WTC11 (cell line): ENCODE measurements at regions of chr6 and their contacts with region 1.

Region 1: DNA sequence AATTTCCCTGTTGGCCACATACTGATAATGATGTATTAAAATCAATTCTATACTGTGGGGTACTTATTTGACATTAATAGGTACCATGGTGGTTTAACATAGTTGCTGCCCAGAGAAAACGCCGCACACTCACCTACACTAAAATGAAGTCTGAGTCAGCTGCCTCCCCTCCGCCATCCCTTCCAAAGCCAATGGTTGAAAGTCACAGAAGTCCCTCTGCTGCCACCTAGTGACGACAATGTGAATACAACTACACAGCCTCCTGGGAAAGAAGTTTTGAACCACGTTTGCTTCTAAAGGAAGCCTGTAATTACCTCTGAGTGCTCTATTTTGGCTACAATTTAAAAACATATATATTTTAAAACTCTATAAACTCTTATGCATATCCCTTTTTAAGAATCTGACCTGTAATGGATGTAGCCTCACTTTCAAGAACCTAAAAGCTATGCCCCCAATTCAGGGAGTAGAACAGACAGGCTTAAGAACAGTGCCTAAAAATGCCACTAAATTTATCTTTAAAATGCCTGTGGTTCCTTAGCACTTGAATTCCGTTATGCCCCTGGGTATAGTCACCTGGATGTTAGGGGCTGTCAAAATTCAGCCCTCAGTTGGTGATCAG is 20.6 kb upstream of the ECI2 start:
- DNase-seq: peak; percentile 76
- ATAC-seq: peak; percentile 94
- H3K4me3 Mint-ChIP-seq: no peak overlapping the region
- H3K27ac Mint-ChIP-seq: no peak overlapping the region
- H3K4me1 Mint-ChIP-seq: peaks cover 18% of the 10 kb centered on the region
- H3K27me3 Mint-ChIP-seq: no peaks in the 10 kb centered on the region
- CTCF ChIP-seq: peak; percentile 74

Region 2: DNA sequence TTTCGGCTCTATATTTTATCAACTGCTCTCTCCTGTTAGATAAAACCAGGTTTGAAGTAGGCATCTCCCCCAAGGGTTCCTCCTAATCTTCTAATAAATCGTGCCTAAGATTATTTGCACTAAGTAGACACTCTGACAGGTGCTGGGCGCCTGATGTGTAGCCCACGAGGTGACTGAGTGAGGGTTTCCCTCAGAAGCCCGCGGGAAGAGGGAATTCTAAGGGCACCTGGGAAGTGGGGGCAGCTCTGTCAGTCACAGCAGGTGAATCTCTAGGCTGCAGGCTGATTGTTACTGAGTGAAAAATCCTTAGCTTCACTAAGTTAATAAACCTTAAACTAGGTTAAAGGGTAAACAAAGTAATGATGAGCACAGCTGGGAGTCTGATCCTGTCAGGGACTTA is 472.6 kb before region 1 on chr6:
- CTCF ChIA-PET with region 1: no interaction called
- POLR2A ChIA-PET with region 1: no interaction called
- DNase-seq: no peak
- ATAC-seq: no peak
- H3K4me3 Mint-ChIP-seq: no peak overlapping the region
- H3K27ac Mint-ChIP-seq: no peak overlapping the region
- H3K4me1 Mint-ChIP-seq: peaks cover 8% of the 10 kb centered on the region; the same call in 1 of the 2 replicates
- H3K27me3 Mint-ChIP-seq: peaks cover 11% of the 10 kb centered on the region
- CTCF ChIP-seq: no peak

Region 3: GRCh38 chr6:4055420-4056041 is 100.4 kb before region 1 on chr6:
- CTCF ChIA-PET with region 1: interaction called, 10 read pairs
- POLR2A ChIA-PET with region 1: no interaction called
- DNase-seq: no peak
- ATAC-seq: no peak
- H3K4me3 Mint-ChIP-seq: no peak overlapping the region
- H3K27ac Mint-ChIP-seq: no peak overlapping the region
- H3K4me1 Mint-ChIP-seq: peaks cover 3% of the 10 kb centered on the region; the same call in 1 of the 2 replicates
- H3K27me3 Mint-ChIP-seq: no peaks in the 10 kb centered on the region
- CTCF ChIP-seq: no peak

Region 4: DNA sequence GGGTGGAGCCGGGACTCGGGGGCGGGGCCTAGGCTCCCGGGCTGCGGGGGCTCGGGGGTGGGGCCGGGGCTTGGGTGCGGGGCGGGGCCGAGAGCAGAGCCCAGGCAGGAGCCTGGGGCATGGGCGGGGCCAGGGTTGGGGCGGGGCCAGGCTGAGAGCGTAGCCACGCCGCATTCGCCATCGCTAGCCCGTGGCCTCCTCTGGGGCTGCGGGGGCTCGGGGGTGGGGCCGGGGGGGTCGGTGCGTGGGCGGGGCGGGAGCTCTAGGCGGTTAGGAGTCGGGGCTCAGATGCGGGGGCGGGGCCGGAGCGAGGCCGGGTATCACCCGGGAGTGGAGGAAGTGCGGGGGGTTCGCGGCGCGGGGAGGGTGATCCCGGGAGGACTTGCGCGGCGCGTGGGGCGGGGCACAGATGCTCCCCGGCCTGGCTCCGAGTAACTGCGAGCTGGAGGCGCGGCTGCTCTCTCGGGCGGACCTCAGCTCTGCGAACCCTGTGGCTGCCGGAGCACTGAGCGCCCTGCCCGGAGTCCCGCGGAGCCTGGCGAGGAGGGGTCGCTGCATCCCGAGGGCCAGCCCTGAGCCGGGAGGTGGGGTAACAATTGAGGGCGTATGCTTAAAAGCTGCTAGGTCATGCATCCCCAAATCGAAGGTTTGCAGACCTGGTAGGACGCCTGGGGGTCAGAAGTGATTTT is 20.1 kb before region 1 on chr6:
- CTCF ChIA-PET with region 1: interaction called, 14 read pairs
- POLR2A ChIA-PET with region 1: no interaction called
- DNase-seq: peak; percentile 95
- ATAC-seq: peak; percentile 89
- H3K4me3 Mint-ChIP-seq: peak overlapping the region; percentile 69
- H3K27ac Mint-ChIP-seq: peak overlapping the region; percentile 84
- H3K4me1 Mint-ChIP-seq: peaks cover 28% of the 10 kb centered on the region
- H3K27me3 Mint-ChIP-seq: no peaks in the 10 kb centered on the region
- CTCF ChIP-seq: no peak